ENCODE measurements at regions of chr10 and their contacts with region 1.

Region 1: DNA sequence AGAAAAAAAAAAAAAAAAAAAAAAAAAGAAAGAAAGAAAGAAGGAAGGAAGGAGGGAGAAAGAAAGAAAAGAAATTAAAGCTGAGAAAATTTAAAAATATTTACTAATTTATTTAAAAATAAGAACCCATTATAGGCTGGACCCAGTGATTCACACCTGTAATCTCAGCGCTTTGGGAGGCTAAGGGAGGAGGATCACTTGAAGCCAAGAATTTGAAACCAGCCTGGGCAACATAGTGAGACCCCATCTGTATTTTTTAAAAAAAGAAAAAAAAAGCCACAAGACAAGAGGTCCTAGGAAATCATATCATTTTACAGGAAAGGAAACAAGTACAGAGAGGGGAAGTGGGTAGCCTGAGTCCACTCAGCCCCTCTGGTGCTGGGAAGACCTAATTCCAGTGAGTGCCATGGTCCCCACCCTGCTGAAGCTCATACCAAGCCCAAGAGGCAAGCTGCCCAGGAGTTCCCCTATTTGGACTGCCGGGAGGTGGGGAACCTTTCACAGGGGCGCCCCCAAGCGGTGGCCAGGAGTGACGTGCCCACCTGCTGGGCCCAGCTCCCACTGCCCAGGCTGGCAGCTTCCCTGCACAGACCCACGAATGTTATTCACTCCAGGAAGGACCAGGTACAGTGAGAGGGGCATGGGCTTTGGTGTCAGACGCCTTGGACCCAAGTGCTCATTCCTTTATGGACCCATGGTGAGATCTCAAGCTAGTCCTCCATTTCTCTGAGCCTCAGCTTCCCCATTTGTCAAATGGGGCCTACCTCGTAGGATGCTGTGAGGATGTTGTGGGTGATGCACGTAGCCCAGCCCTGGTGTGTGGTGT is 133.6 kb downstream of the ZMIZ1 start:
- DNase-seq: no peak
- H3K4me3 ChIP-seq: no peak overlapping the region
- CTCF ChIP-seq: no peak
- POLR2A ChIP-seq: no peak

Region 2: DNA sequence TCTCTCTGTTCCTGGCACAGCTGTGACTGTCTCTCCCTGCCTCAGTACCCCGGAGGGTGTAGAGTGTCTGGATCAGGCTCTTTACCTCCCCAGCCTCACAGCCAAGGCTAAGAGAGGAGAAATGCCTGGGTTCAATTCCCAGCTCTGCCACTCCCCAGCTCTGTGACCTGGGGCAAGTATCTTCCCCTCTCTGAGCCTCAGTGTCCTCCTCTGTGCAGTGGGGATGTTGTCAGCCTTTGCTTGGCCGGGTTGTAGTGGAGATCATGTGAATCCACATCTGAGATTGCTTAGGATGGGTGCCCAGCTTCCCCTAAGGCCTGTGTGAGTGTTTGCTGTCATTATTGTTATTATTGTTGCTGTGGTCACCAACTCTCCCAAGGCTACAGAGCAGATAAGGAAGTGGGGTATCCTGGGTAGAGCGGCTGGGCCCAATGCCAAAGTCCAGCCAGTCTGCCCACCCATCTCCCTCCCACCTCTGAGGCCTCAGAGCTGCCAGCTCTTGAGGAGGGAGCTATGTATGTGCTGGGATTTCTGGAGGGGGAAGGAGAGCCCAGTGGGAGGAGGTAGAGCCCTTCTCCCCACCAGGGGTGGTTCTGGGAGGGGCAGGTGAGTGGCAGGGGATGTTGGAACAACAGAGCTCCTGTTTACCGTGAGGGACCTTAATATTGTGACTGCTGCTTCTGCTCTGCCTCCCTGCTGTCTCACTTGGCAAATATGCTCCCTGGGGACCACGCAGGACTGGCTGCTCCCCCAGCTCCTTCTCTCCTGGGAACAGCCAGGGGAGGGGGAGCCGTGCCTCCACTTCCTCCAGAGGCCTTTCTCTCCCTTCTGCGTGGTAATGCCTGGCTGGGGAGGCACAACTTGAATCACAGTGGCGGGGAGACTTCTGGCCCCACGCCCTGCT is 998.2 kb before region 1 on chr10:
- intact Hi-C with region 1: loop called (anchors 10 kb)
- DNase-seq: no peak
- H3K4me3 ChIP-seq: no peak overlapping the region
- CTCF ChIP-seq: no peak
- POLR2A ChIP-seq: no peak

Region 3: DNA sequence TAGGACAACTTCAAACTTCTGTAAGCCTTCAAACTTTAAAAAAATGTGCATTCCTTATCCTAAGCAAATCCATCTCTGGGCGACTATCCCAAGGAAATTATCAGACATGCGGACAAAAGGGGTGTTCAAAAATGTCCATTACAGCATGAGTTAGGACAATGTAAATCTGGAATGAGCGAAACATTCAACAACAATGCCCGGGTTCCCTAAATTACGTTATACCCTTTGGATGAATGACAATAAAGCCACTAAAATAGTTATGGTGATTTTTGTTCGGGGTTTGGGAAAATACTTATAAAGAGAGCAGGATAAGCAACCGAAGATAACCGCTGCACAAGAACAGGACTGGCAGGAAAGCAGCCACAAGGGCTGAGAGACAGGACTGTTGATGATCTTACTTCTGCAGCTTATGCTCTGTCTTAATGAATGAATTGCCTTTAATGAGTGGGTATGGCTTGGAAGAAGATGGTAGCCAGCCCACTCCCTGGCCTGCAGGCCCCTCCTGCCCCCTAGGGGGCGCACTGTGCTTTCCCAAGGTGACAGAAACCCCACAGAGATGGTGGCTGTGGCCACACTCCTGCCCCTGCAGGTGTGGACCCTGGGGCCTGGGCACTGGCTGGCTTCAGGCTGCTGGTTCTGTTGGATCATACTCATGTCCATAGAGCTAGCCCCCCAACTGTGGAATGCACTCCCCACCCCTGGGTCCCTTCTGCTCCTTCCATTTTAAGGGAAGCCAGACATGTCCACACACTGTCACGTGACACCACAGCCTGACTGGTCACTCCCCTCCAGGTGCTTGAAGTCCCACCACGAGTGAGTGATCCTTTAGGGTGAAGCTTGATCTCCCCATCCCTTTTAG is 198.0 kb after region 1 on chr10:
- intact Hi-C with region 1: no loop called
- DNase-seq: no peak
- H3K4me3 ChIP-seq: no peak overlapping the region
- CTCF ChIP-seq: no peak
- POLR2A ChIP-seq: no peak

Measured in lower leg skin (tissue), 4 donors.